Activated naive CD4-positive, alpha-beta T cell treated with anti-CD3 and anti-CD28 coated beads, Interleukin-2, amount 10 ng/mL, durations not matched to agents 7 days and 5 days (primary cell): ENCODE measurements at regions of chr6 and their contacts with region 1.

Region 1: DNA sequence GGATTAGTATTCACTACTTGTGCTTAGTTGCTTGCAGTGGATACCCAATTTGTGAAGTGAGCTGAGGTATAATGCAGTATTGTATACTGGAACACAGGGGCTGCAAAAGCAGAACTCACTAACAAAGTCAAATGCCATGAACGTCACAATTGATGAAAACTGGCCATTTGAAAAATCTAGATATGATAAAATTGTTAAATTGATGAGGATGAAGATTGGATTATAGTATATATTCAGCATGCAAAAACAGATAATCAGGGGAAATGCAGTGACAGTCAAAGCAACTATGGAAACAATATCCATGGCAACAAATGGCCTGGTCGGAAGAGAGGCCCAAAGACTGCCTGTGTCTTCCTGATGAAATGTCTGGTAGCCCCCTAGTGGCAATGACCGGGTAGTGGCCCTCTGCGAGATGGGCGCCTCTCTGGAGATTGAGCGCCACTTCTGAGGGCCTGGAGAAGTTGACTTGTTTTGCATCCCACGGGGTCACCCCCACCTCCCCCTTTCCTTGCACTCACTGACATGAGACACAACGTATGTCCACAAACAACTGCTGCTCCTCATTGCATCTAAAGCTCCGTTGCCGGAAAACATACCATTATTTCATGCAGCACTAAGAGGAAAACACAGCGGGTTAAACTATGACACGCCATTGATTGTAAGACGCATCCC is 43.6 kb downstream of the C6orf15 start:
- DNase-seq: peak; percentile 78
- H3K4me3 Mint-ChIP-seq: no peak overlapping the region
- H3K27ac Mint-ChIP-seq: no peak overlapping the region
- H3K4me1 Mint-ChIP-seq: no peaks in the 10 kb centered on the region
- H3K27me3 Mint-ChIP-seq: peaks cover 7% of the 10 kb centered on the region

Region 2: GRCh38 chr6:31058128-31058894 is 10.5 kb before region 1 on chr6:
- CTCF ChIA-PET with region 1: interaction called, 10 read pairs
- DNase-seq: no peak
- H3K4me3 Mint-ChIP-seq: no peak overlapping the region
- H3K27ac Mint-ChIP-seq: no peak overlapping the region
- H3K4me1 Mint-ChIP-seq: no peaks in the 10 kb centered on the region
- H3K27me3 Mint-ChIP-seq: peaks cover 52% of the 10 kb centered on the region

Region 3: DNA sequence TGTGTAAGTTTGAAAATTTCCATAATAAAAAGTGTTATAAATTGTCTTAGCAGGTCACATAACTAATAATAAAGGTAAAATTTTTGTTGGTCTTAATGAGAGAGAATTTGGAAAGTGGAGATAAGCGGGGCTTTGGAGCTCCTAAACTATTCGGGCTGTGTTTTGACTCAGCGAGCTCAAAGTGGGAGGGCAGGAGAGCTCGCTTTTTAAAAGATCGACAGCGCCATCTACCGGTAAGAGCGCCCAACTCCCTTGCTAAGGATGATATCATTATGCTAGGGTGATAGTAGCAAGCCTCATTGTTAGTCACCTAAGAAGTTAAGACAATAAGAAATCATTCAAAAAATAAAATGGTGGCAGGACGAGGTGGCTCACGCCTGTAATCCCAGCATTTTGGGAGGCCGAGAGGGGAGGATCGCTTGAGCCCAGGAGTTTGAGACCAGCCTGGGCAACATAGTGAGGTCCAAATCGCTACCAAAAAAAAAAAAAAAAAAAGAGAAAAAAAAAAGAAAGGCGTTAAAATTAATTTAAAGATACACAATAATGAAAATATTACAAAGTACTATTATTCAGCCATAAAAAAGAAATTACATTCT is 18.8 kb after region 1 on chr6:
- CTCF ChIA-PET with region 1: interaction called, 18 read pairs
- DNase-seq: peak; percentile 92
- H3K4me3 Mint-ChIP-seq: no peak overlapping the region
- H3K27ac Mint-ChIP-seq: no peak overlapping the region
- H3K4me1 Mint-ChIP-seq: peaks cover 7% of the 10 kb centered on the region
- H3K27me3 Mint-ChIP-seq: peaks cover 46% of the 10 kb centered on the region

Region 4: GRCh38 chr6:31157513-31158139 is 88.8 kb after region 1 on chr6 and contains the start of gene CCHCR1:
- CTCF ChIA-PET with region 1: no interaction called
- DNase-seq: no peak
- H3K4me3 Mint-ChIP-seq: peak within 1 kb of the TSS; percentile 95
- H3K27ac Mint-ChIP-seq: peak within 1 kb of the TSS; percentile 87
- H3K4me1 Mint-ChIP-seq: peaks cover 50% of the 10 kb centered on the region
- H3K27me3 Mint-ChIP-seq: no peaks in the 10 kb centered on the region